OCI-LY7 (cell line): ENCODE measurements at regions of chrX and their contacts with region 1.

Region 1: GRCh38 chrX:65451663-65452062 is 82.9 kb downstream of the LAS1L start:
- DNase-seq: peak; percentile 64
- H3K4me3 ChIP-seq: no peak overlapping the region
- H3K27ac ChIP-seq: no peak overlapping the region
- H3K4me1 ChIP-seq: no peaks in the 10 kb centered on the region
- CTCF ChIP-seq: peak; percentile 80

Region 2: DNA sequence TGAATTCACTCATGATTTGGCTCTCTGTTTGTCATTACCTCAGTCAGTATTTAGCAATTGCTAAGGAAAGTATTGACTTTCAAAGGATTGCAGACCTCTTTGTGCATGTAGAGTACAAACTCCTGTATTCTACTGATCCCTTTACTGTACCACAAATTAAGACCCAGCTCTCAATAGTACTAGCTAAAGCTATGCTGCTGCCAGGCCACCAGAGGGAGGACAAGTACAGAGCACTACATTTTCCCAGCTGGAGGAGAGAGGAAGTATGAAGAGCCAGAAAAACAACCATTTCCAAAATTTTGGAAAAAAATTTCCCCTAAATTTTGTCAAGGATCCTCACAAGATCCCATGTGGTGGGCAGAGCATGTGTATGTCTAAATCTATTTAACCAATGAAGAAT is 881.5 kb before region 1 on chrX:
- CTCF ChIA-PET with region 1: no interaction called
- POLR2A ChIA-PET with region 1: no interaction called
- intact Hi-C with region 1: loop called (anchors 5 kb)
- DNase-seq: peak; percentile 39
- H3K4me3 ChIP-seq: no peak overlapping the region
- H3K27ac ChIP-seq: no peak overlapping the region
- H3K4me1 ChIP-seq: peaks cover 4% of the 10 kb centered on the region
- CTCF ChIP-seq: peak; percentile 68